GM10248 (cell line): ENCODE measurements at regions of chr1 and their contacts with region 1.

Region 1: GRCh38 chr1:27979151-27979858 is 19.5 kb downstream of the XKR8 start:
- DNase-seq: peak; percentile 39
- CTCF ChIP-seq: peak; percentile 15

Region 2: GRCh38 chr1:27858072-27858958 is 121.0 kb before region 1 on chr1:
- CTCF ChIA-PET with region 1: interaction called, 78 read pairs
- POLR2A ChIA-PET with region 1: no interaction called
- DNase-seq: peak; percentile 82
- CTCF ChIP-seq: peak; percentile 99

Region 3: GRCh38 chr1:27922272-27922671 is 57.0 kb before region 1 on chr1:
- CTCF ChIA-PET with region 1: no interaction called
- POLR2A ChIA-PET with region 1: no interaction called
- DNase-seq: no peak
- CTCF ChIP-seq: no peak

Region 4: GRCh38 chr1:27992276-27992675 is 13.0 kb after region 1 on chr1:
- CTCF ChIA-PET with region 1: interaction called, 11 read pairs
- POLR2A ChIA-PET with region 1: no interaction called
- DNase-seq: no peak
- CTCF ChIP-seq: no peak

Region 5: GRCh38 chr1:27999055-27999454 is 19.8 kb after region 1 on chr1:
- CTCF ChIA-PET with region 1: interaction called, 11 read pairs
- POLR2A ChIA-PET with region 1: no interaction called
- DNase-seq: no peak
- CTCF ChIP-seq: no peak